Heart right ventricle (tissue), 16 donors: ENCODE measurements at regions of chr17 and their contacts with region 1.

Region 1: GRCh38 chr17:43151880-43152456 is 19.0 kb upstream of the NBR1 start:
- DNase-seq: no peak
- ATAC-seq: no peak
- H3K4me3 ChIP-seq: no peak overlapping the region
- H3K27ac ChIP-seq: no peak overlapping the region
- H3K4me1 ChIP-seq: no peaks in the 10 kb centered on the region
- H3K27me3 ChIP-seq: no peaks in the 10 kb centered on the region
- CTCF ChIP-seq: no peak

Region 2: GRCh38 chr17:41792845-41793783 is 1358.9 kb before region 1 on chr17:
- intact Hi-C with region 1: loop called in 1 of 10 experiments (anchors 5 kb)
- DNase-seq: peak; percentile 60 to 78
- ATAC-seq: peak; percentile 77 to 91 (median 86)
- H3K4me3 ChIP-seq: peak overlapping the region in 7 of 10 donors; percentile 12 to 34 (median 30)
- H3K27ac ChIP-seq: peak overlapping the region; percentile 75 to 98 (median 90)
- H3K4me1 ChIP-seq: peaks cover 14 to 44% (median 34%) of the 10 kb centered on the region in 9 donors
- H3K27me3 ChIP-seq: no peaks in the 10 kb centered on the region
- CTCF ChIP-seq: no peak

Region 3: DNA sequence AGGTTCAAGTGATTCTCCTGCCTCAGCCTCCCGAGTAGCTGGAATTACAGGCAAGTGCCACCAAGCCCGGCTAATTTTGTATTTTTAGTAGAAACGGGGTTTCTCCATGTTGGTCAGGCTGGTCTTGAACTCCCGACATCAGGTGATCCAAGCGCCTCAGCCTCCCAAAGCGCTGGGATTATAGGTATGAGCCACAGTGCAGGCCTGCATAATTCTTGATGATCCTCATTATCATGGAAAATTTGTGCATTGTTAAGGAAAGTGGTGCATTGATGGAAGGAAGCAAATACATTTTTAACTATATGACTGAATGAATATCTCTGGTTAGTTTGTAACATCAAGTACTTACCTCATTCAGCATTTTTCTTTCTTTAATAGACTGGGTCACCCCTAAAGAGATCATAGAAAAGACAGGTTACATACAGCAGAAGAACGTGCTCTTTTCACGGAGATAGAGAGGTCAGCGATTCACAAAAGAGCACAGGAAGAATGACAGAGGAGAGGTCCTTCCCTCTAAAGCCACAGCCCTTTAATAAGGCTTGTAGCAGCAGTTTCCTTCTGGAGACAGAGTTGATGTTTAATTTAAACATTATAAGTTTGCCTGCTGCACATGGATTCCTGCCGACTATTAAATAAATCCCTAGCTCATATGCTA is 88.9 kb before region 1 on chr17:
- intact Hi-C with region 1: no loop called
- DNase-seq: no peak
- ATAC-seq: no peak
- H3K4me3 ChIP-seq: no peak overlapping the region
- H3K27ac ChIP-seq: no peak overlapping the region
- H3K4me1 ChIP-seq: peaks cover 0 to 2% (median 0%) of the 10 kb centered on the region in 9 donors
- H3K27me3 ChIP-seq: no peaks in the 10 kb centered on the region
- CTCF ChIP-seq: no peak